Naive thymus-derived CD4-positive, alpha-beta T cell (primary cell): ENCODE measurements at regions of chr15 and their contacts with region 1.

Region 1: GRCh38 chr15:64430000-64430735 is 30.2 kb upstream of the ZNF609 start:
- DNase-seq: peak in 8 of 9 donors; percentile 29 to 89 (median 81)
- ATAC-seq: peak; percentile 95
- H3K4me3 ChIP-seq: peak overlapping the region; percentile 15
- H3K4me3 Mint-ChIP-seq: peak overlapping the region; percentile 25 to 85 (median 80)
- H3K27ac ChIP-seq: peak overlapping the region; percentile 59
- H3K27ac Mint-ChIP-seq: peak overlapping the region; percentile 78 to 98 (median 93)
- H3K4me1 ChIP-seq: peaks cover 24 to 53% of the 10 kb centered on the region in 2 donors
- H3K4me1 Mint-ChIP-seq: peaks cover 25 to 66% (median 57%) of the 10 kb centered on the region in 7 donors
- H3K27me3 ChIP-seq: no peaks in the 10 kb centered on the region
- H3K27me3 Mint-ChIP-seq: no peaks in the 10 kb centered on the region

Region 2: DNA sequence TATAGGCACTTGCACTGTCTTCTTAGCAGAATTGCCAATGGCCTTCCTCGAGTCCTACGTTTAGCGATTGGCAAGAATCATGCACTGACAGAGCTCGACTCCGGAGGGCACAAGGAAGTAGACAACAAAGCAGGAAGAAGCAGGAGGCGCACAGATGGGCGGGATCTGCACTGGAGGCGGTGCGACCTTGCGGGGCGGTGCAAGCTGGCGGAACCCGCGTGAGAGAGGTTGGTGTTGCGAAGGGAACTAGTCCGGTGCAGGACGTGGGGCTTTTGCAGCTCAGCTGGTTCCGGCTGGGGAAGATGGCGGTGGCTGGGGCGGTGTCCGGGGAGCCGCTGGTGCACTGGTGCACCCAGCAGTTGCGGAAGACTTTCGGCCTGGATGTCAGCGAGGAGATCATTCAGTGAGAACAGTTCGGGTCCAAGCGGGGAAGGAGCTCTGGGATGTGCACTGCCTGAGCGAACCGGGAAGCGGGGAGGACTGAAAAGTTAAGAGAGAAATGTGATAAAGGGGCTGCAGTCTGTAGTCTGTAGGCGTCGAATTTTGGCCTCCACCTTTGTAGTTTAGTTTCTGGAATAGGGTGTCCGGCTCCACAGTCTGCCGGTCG is 42.5 kb before region 1 on chr15 and contains the start of gene TRIP4:
- CTCF ChIA-PET with region 1: no interaction called
- POLR2A ChIA-PET with region 1: interaction called, 5 read pairs
- intact Hi-C with region 1: loop called (anchors 2 kb)
- DNase-seq: peak; percentile 90 to 97 (median 96)
- ATAC-seq: peak; percentile 100
- H3K4me3 ChIP-seq: peak within 1 kb of the TSS; percentile 97
- H3K4me3 Mint-ChIP-seq: peak within 1 kb of the TSS; percentile 95 to 99 (median 97)
- H3K27ac ChIP-seq: peak within 1 kb of the TSS; percentile 64
- H3K27ac Mint-ChIP-seq: peak within 1 kb of the TSS; percentile 84 to 99 (median 92)
- H3K4me1 ChIP-seq: peaks cover 8 to 10% of the 10 kb centered on the region in 2 donors
- H3K4me1 Mint-ChIP-seq: peaks cover 17 to 24% (median 19%) of the 10 kb centered on the region in 7 donors
- H3K27me3 ChIP-seq: no peaks in the 10 kb centered on the region
- H3K27me3 Mint-ChIP-seq: no peaks in the 10 kb centered on the region
- total RNA-seq, gene TRIP4: 16.5 to 29.3 (median 25.4) TPM

Region 3: DNA sequence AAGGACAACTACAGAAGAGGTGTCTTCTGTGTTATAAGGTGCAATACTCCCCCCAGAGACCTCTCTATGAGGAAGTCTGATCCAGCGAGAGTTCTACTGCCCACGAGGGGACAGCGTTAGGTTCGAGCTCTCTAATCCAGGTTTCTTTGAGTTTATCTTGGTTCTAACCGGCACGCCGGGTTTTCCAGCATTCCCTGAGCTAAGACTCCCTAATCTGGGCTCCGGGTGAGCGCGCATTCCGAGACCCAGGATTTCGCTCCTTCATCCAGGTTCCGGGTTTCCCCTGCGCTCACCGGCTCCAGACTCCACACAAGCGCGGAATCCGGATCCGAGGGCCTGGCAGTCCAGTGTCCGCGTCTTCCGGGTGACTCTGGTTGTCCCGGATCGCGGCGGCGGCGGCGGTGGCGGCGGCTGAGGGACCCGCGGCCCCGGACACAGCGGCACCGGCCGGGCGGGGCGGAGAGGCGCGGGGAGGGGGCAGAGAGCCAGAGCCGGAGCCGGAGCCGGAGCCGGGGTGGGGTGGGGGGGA is 30.1 kb after region 1 on chr15 and contains the start of gene ZNF609:
- CTCF ChIA-PET with region 1: interaction called, 5 read pairs
- POLR2A ChIA-PET with region 1: interaction called, 12 read pairs
- intact Hi-C with region 1: loop called (anchors 1 kb)
- DNase-seq: peak; percentile 75 to 97 (median 85)
- ATAC-seq: peak; percentile 89
- H3K4me3 ChIP-seq: peak within 1 kb of the TSS; percentile 88
- H3K4me3 Mint-ChIP-seq: peak within 1 kb of the TSS; percentile 90 to 98 (median 94)
- H3K27ac ChIP-seq: peak within 1 kb of the TSS; percentile 70
- H3K27ac Mint-ChIP-seq: peak within 1 kb of the TSS; percentile 89 to 97 (median 92)
- H3K4me1 ChIP-seq: peaks cover 22 to 69% of the 10 kb centered on the region in 2 donors
- H3K4me1 Mint-ChIP-seq: peaks cover 61 to 91% (median 88%) of the 10 kb centered on the region in 7 donors
- H3K27me3 ChIP-seq: no peaks in the 10 kb centered on the region
- H3K27me3 Mint-ChIP-seq: no peaks in the 10 kb centered on the region
- total RNA-seq, gene ZNF609: 55.0 to 89.1 (median 78.3) TPM

Region 4: GRCh38 chr15:64490598-64491259 is 60.6 kb after region 1 on chr15:
- CTCF ChIA-PET with region 1: no interaction called
- POLR2A ChIA-PET with region 1: no interaction called
- intact Hi-C with region 1: no loop called
- DNase-seq: no peak
- ATAC-seq: no peak
- H3K4me3 ChIP-seq: no peak overlapping the region
- H3K4me3 Mint-ChIP-seq: peak overlapping the region in 3 of 10 donors; percentile 12 to 36 (median 30)
- H3K27ac ChIP-seq: no peak overlapping the region
- H3K27ac Mint-ChIP-seq: peak overlapping the region in 8 of 9 donors; percentile 25 to 85 (median 58)
- H3K4me1 ChIP-seq: peaks cover 0 to 28% of the 10 kb centered on the region in 2 donors
- H3K4me1 Mint-ChIP-seq: peaks cover 24 to 80% (median 55%) of the 10 kb centered on the region in 7 donors
- H3K27me3 ChIP-seq: no peaks in the 10 kb centered on the region
- H3K27me3 Mint-ChIP-seq: no peaks in the 10 kb centered on the region

Region 5: GRCh38 chr15:64530918-64531317 is 100.8 kb after region 1 on chr15:
- CTCF ChIA-PET with region 1: interaction called, 12 read pairs
- POLR2A ChIA-PET with region 1: no interaction called
- intact Hi-C with region 1: no loop called
- DNase-seq: no peak
- ATAC-seq: no peak
- H3K4me3 ChIP-seq: no peak overlapping the region
- H3K4me3 Mint-ChIP-seq: peak overlapping the region in 4 of 10 donors; percentile 6 to 32 (median 11)
- H3K27ac ChIP-seq: no peak overlapping the region
- H3K27ac Mint-ChIP-seq: peak overlapping the region in 2 of 9 donors; percentile 1 to 21
- H3K4me1 ChIP-seq: peaks cover 5 to 33% of the 10 kb centered on the region in 2 donors
- H3K4me1 Mint-ChIP-seq: peaks cover 55 to 90% (median 74%) of the 10 kb centered on the region in 7 donors
- H3K27me3 ChIP-seq: no peaks in the 10 kb centered on the region
- H3K27me3 Mint-ChIP-seq: no peaks in the 10 kb centered on the region

Region 6: DNA sequence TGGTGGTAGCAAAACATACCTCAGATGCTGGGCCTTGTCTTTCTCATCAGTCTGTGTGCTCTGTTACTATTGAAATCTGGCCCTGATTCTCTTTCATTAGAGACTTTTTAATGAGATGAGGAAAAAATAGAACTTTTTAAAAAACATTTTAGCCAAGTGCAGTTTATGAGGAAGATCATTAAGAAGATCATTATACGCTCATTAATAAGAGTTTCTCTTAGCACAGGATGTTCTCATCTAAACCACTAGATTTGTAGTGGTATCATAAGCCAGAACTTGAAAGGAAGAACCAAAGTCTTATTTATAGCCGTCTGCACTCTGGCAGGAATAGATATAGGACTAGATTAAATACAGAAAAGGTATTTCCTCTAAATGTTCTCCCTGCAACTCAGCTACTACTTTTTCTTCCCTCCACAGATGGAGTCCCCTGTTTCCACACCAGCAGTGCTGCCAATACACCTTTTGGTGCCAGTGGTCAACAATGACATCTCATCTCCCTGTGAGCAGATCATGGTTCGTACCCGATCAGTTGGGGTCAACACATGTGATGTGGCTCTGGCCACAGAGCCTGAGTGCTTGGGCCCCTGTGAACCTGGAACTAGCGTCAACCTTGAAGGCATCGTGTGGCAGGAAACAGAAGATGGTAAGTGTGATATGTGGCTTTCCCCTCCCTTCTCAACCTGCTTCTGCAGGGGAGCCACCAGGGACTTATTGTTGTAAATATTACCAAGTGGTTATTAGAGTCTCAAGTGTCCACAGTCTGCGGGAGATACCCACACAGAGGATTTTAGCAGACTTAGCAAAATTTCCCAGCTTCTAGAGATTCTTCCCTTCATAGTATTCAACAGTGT is 192.5 kb after region 1 on chr15:
- CTCF ChIA-PET with region 1: interaction called, 6 read pairs
- POLR2A ChIA-PET with region 1: interaction called, 9 read pairs
- intact Hi-C with region 1: loop called in 1 of 2 experiments (anchors 1 kb)
- DNase-seq: peak; percentile 31 to 80 (median 66)
- ATAC-seq: peak; percentile 89
- H3K4me3 ChIP-seq: peak overlapping the region; percentile 46
- H3K4me3 Mint-ChIP-seq: peak overlapping the region; percentile 42 to 90 (median 80)
- H3K27ac ChIP-seq: peak overlapping the region; percentile 55
- H3K27ac Mint-ChIP-seq: peak overlapping the region; percentile 82 to 94 (median 91)
- H3K4me1 ChIP-seq: peaks cover 53 to 92% of the 10 kb centered on the region in 2 donors
- H3K4me1 Mint-ChIP-seq: peaks cover 72 to 98% (median 93%) of the 10 kb centered on the region in 7 donors
- H3K27me3 ChIP-seq: no peaks in the 10 kb centered on the region
- H3K27me3 Mint-ChIP-seq: no peaks in the 10 kb centered on the region

Region 7: GRCh38 chr15:64651573-64652260 is 221.5 kb after region 1 on chr15:
- CTCF ChIA-PET with region 1: interaction called, 96 read pairs
- POLR2A ChIA-PET with region 1: interaction called, 8 read pairs
- intact Hi-C with region 1: loop called (anchors 1 to 2 kb)
- DNase-seq: peak in 7 of 9 donors; percentile 26 to 63 (median 45)
- ATAC-seq: peak; percentile 95
- H3K4me3 ChIP-seq: peak overlapping the region; percentile 8
- H3K4me3 Mint-ChIP-seq: peak overlapping the region; percentile 21 to 83 (median 64)
- H3K27ac ChIP-seq: peak overlapping the region; percentile 58
- H3K27ac Mint-ChIP-seq: peak overlapping the region; percentile 68 to 96 (median 88)
- H3K4me1 ChIP-seq: peaks cover 24 to 32% of the 10 kb centered on the region in 2 donors
- H3K4me1 Mint-ChIP-seq: peaks cover 29 to 80% (median 62%) of the 10 kb centered on the region in 7 donors
- H3K27me3 ChIP-seq: no peaks in the 10 kb centered on the region
- H3K27me3 Mint-ChIP-seq: no peaks in the 10 kb centered on the region